ENCODE measurements at regions of chr1 and their contacts with region 1.

Region 1: DNA sequence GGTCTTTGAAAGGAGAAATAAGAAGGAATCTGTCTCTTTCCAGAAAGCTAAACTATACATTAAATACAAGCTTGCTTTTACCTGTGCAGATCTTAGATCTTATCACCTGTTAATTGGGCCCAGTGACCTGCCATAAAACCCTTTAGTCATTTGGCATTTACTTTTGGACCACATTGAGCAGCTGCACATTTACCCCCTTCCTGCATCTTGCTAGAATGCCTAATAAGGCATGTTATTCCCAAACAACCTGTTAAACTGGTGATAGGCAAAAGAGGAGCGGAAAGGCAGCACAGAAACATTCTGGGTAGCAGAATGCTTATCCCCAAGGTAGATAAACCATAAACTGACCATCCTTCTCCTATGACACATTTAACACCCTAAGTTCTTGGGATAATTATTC is 40.0 kb upstream of the L1TD1 start:
- DNase-seq: no peak
- CTCF ChIP-seq: no peak

Region 2: GRCh38 chr1:61980561-61980960 is 174.1 kb before region 1 on chr1:
- CTCF ChIA-PET with region 1: no interaction called
- POLR2A ChIA-PET with region 1: no interaction called
- DNase-seq: no peak
- CTCF ChIP-seq: no peak

Region 3: GRCh38 chr1:62175568-62176179 is 21.0 kb after region 1 on chr1:
- CTCF ChIA-PET with region 1: interaction called, 10 read pairs
- POLR2A ChIA-PET with region 1: no interaction called
- DNase-seq: peak; percentile 55
- CTCF ChIP-seq: peak; percentile 80